ENCODE measurements at regions of chr1 and their contacts with region 1.

Region 1: DNA sequence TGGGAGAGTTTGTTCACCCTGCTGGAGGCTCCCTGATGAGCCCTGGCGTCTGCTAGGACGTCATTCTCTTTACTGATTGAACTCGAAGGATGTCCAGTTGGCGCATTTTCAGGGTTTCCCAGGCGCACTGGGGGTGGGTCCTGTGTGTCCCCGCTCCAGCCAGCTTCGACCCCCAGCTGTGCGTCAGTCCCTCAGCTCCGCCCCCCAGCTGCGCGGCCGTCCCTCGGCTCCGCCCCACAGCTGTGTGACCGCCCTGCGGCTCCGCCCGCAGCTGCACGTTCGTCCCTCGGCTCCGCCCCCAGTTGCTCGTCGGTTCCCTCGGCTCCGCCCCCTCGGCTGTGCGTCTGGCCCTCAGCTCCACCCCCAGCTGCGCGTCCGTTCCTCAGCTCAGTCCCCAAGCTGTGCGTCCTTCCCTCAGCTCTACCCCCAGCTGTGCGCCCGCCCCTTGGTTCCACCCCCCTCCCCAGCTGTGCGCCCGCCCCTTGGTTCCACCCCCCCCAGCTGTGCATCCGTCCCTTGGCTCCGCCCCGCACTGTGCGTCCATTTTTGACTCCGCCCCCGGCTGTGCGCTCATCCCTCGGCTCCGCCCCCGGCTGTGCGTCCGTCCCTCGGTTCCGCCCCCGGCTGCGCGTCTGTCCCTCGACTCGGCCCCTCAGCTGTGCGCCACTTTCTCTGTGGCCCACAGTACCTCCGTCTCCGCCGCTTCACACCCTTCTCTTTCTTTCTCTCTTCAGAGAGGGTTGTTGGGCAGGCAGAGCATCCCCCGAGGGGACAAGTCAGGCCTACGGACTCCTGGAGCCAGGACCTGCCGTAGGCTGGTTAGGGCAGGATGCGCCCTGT is 61.3 kb downstream of the FAAP20 start:
- DNase-seq: peak; percentile 98 to 99 (median 99)
- ATAC-seq: peak; percentile 87 to 93 (median 92)
- H3K4me3 ChIP-seq: peak overlapping the region in 11 of 12 donors; percentile 25 to 60 (median 54)
- H3K27ac ChIP-seq: peak overlapping the region; percentile 63 to 97 (median 92)
- H3K4me1 ChIP-seq: peaks cover 2 to 36% (median 26%) of the 10 kb centered on the region in 12 donors
- H3K27me3 ChIP-seq: no peaks in the 10 kb centered on the region
- CTCF ChIP-seq: peak in 1 of 12 donors; percentile 10
- POLR2A ChIP-seq: peak in 1 of 2 donors; percentile 67

Region 2: GRCh38 chr1:1796466-1796865 is 336.8 kb before region 1 on chr1:
- intact Hi-C with region 1: no loop called
- DNase-seq: peak in 1 of 5 donors; percentile 30
- ATAC-seq: no peak
- H3K4me3 ChIP-seq: no peak overlapping the region
- H3K27ac ChIP-seq: no peak overlapping the region
- H3K4me1 ChIP-seq: peaks cover 0 to 18% (median 10%) of the 10 kb centered on the region in 12 donors
- H3K27me3 ChIP-seq: no peaks in the 10 kb centered on the region
- CTCF ChIP-seq: peak in 6 of 12 donors; percentile 6 to 24 (median 18)
- POLR2A ChIP-seq: no peak

Region 3: DNA sequence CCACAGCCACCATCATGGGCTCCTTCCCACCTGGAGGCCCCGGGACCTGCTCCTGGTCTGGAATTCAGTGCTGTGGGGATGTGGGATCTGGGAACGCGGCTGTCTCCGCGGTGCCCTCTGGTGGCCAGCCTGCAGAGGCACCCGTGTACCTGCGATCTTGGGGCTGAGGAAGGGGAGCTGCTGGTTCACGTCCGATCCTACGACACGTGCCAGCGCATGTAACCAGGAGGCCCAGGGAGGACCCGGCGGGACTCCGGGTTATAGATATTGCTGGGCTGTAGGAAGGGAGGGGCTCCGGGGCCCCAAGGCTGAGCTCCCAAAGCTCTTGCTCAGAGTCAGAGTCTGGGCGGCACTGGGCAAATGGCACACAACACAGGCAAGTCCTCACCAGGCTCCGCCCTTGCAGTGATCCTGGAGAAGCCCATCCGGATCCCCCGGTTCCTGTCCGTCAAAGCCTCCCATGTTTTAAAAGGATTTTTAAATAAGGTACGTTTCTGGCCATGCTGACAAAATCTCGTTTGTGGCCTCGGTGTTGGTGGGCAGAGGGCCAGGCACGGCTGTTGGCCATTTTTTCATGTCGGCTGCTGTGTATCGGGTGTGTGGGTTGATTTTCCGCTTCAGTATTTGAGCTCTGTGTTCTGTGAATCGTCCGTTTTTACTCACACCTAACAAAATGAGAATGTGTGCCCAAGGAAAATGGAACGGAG is 41.2 kb after region 1 on chr1:
- intact Hi-C with region 1: loop called in 6 of 10 experiments (anchors 1 to 5 kb)
- DNase-seq: peak; percentile 58 to 80 (median 61)
- ATAC-seq: peak; percentile 33 to 88 (median 70)
- H3K4me3 ChIP-seq: peak overlapping the region; percentile 7 to 63 (median 44)
- H3K27ac ChIP-seq: peak overlapping the region in 3 of 12 donors; percentile 12 to 60 (median 28)
- H3K4me1 ChIP-seq: peaks cover 0 to 10% (median 4%) of the 10 kb centered on the region in 12 donors
- H3K27me3 ChIP-seq: no peaks in the 10 kb centered on the region
- CTCF ChIP-seq: peak; percentile 82 to 97 (median 88)
- POLR2A ChIP-seq: no peak

Region 4: GRCh38 chr1:2189459-2190425 is 56.5 kb after region 1 on chr1:
- intact Hi-C with region 1: loop called in 1 of 10 experiments (anchors 2 kb)
- DNase-seq: peak; percentile 93 to 97 (median 96)
- ATAC-seq: peak; percentile 87 to 94 (median 92)
- H3K4me3 ChIP-seq: peak overlapping the region; percentile 4 to 68 (median 60)
- H3K27ac ChIP-seq: peak overlapping the region; percentile 80 to 98 (median 94)
- H3K4me1 ChIP-seq: peaks cover 4 to 52% (median 37%) of the 10 kb centered on the region in 12 donors
- H3K27me3 ChIP-seq: no peaks in the 10 kb centered on the region
- CTCF ChIP-seq: peak in 1 of 12 donors; percentile 18
- POLR2A ChIP-seq: peak; percentile 58 to 82

Region 5: GRCh38 chr1:2381741-2382620 is 248.7 kb after region 1 on chr1:
- intact Hi-C with region 1: loop called in 3 of 10 experiments (anchors 5 kb)
- DNase-seq: peak; percentile 85 to 93 (median 88)
- ATAC-seq: peak; percentile 92 to 97 (median 95)
- H3K4me3 ChIP-seq: no peak overlapping the region
- H3K27ac ChIP-seq: peak overlapping the region in 1 of 12 donors; percentile 40
- H3K4me1 ChIP-seq: peaks cover 0 to 15% (median 8%) of the 10 kb centered on the region in 12 donors
- H3K27me3 ChIP-seq: no peaks in the 10 kb centered on the region
- CTCF ChIP-seq: peak; percentile 90 to 96 (median 94)
- POLR2A ChIP-seq: no peak

Region 6: DNA sequence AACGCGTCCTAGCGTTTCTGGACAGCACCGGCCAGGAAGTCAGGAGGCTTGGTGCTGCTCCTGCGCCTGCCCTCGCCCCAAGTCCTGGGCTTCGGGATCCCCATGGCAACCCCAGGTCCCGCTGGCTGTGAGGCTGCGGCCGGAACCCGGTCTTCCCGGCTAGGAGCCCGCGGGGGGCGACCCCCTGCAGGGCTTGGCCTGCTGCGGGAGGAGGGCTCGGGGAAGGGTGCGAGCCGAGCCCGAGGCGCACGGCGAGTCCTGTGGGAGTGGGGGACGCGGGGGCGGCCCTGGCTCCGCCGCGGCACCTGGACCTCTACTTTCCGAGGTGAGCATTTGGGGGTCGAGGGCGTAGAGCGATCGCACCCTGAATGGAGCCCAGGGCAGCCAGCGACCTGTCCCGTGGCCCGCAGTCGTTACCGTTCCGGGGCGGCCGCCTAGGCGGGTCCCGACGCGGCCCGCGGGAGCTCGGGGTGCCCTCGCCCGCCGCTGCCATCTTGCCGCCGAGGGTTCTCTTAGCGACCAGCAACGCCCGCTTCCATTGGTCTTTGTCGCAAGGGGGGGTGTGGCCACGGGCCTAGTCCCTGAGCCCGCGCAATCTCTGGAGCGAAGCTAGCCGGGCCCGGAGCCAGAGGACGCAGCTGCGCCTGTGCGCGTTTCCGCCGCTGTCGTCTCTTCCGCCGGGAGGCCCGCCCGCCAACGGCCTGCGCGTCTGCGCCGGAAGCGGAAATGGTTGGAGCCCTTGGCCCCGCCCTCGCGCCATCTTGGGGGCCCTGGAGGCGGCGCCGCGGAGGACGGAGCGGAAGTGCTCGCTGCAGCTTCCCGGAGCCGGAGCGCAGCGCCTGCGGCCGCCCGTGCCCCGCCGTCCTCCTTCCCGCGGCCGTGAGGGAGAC is 258.0 kb after region 1 on chr1 and contains the starts of genes MORN1 and RER1:
- intact Hi-C with region 1: loop called in 1 of 10 experiments (anchors 5 kb)
- DNase-seq: peak; percentile 99 to 100 (median 100)
- ATAC-seq: peak; percentile 95 to 99 (median 97)
- H3K4me3 ChIP-seq: peak within 1 kb of the TSS; percentile 75 to 99 (median 84)
- H3K27ac ChIP-seq: peak within 1 kb of the TSS; percentile 67 to 95 (median 84)
- H3K4me1 ChIP-seq: peaks cover 5 to 48% (median 26%) of the 10 kb centered on the region in 12 donors
- H3K27me3 ChIP-seq: no peaks in the 10 kb centered on the region
- CTCF ChIP-seq: peak in 2 of 12 donors; percentile 8 to 21
- POLR2A ChIP-seq: peak; percentile 12 to 87
- total RNA-seq, gene MORN1: 2.4 to 8.2 (median 3.8) TPM
- total RNA-seq, gene RER1: 47.1 to 124 (median 78.3) TPM

Measured in heart left ventricle (tissue), 16 donors.